Ascending aorta (tissue), 2 donors: ENCODE measurements at regions of chr3 and their contacts with region 1.

Region 1: GRCh38 chr3:12868039-12869034 is 27.0 kb upstream of the RPL32 start:
- DNase-seq: peak; percentile 53 to 94
- H3K4me3 ChIP-seq: peak overlapping the region; percentile 20 to 30
- H3K27ac ChIP-seq: no peak overlapping the region
- H3K4me1 ChIP-seq: peaks cover 3 to 15% of the 10 kb centered on the region in 2 donors
- H3K27me3 ChIP-seq: no peaks in the 10 kb centered on the region
- CTCF ChIP-seq: peak; percentile 90 to 96 (median 91)

Region 2: DNA sequence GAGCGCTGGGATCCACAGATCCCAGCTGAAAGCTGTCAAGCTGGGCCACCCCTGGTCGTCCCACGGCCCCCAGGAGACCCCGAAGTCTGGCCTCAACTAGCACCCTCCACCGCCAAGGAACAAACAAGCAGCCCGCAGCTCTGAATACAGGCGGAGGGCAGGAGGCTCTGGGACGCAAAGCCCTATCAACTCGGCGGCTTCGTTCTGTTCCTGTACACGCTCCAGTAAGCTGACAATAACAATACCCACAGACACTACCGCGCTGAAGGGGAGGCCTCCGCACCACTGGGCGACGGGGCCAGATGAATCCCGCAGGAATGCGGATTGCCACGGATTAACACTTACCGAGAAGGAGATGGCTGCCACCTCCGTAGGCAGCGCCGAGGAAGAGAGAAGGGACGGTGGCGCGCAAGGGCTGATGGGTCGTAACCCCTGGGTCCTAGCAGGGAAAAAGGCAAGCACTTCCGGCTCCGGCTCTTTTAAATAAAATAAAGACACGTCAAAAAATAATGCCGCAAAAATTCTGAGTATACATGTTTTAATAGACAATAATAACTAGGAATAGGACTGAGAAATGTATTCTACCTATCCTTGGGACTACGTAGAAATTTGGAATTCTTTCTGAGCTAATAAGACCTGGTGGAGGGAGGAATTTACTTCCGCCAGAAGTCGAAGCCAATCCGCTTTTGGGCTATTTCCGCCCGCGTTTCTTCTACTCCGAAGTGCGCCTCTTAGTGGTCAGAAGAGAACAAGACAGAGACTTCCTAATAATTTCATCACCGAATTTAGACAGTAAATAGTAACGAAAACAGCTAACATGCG is 27.0 kb before region 1 on chr3 and contains the start of gene RPL32:
- intact Hi-C with region 1: loop called (anchors 2 kb)
- DNase-seq: peak; percentile 31 to 92
- H3K4me3 ChIP-seq: peak within 1 kb of the TSS; percentile 71 to 84
- H3K27ac ChIP-seq: peak within 1 kb of the TSS; percentile 91 to 95
- H3K4me1 ChIP-seq: peaks cover 0 to 19% of the 10 kb centered on the region in 2 donors
- H3K27me3 ChIP-seq: no peaks in the 10 kb centered on the region
- CTCF ChIP-seq: peak; percentile 74 to 82 (median 78)
- total RNA-seq, gene RPL32: 1,821 TPM

Region 3: GRCh38 chr3:12891985-12892839 is 23.9 kb after region 1 on chr3:
- intact Hi-C with region 1: loop called (anchors 1 kb)
- DNase-seq: peak in 1 of 2 donors; percentile 75
- H3K4me3 ChIP-seq: peak overlapping the region in 1 of 2 donors; percentile 53
- H3K27ac ChIP-seq: peak overlapping the region; percentile 48 to 58
- H3K4me1 ChIP-seq: peaks cover 9 to 18% of the 10 kb centered on the region in 2 donors
- H3K27me3 ChIP-seq: no peaks in the 10 kb centered on the region
- CTCF ChIP-seq: peak; percentile 85 to 93 (median 90)

Region 4: DNA sequence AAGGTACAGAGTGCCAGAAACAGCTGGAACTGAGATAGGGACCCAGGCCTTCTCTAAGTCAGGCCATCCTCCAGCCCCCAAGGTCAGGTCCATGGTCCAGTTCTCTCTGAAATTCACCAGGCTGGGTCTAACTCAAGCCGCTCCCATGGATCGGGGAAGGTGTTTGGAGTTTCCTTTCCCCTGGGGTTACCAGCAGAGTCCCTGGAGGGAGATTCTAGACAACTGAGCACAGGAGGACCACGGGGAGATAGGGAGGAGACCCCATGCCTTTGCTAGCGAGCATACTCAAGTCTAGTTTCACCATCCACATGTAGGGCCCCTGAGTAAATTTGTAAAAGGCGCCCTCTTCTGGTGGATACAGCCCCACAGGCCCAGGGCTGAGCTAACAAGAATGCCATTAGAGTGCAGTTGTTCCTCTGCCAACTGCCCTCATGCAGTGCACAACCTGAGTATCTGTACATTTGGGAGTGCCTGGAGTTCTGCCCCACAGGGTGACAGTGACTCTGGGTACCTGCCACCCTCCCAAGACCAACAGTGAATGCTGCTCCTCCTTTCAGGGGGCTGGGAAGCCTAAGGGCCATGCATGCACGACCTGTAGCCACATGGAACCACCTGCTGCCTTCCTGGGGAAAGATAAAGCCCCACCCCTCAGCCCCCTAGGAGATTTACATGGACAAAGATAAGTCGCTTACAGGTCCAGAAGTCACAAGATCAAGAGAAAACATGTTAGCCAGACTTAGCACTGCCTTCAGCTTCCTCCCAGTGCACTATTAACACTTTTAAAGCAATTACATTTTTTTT is 115.9 kb after region 1 on chr3:
- intact Hi-C with region 1: loop called (anchors 1 kb)
- DNase-seq: peak in 1 of 2 donors; percentile 90
- H3K4me3 ChIP-seq: no peak overlapping the region
- H3K27ac ChIP-seq: no peak overlapping the region
- H3K4me1 ChIP-seq: no peaks in the 10 kb centered on the region
- H3K27me3 ChIP-seq: no peaks in the 10 kb centered on the region
- CTCF ChIP-seq: peak; percentile 78 to 86 (median 83)

Region 5: DNA sequence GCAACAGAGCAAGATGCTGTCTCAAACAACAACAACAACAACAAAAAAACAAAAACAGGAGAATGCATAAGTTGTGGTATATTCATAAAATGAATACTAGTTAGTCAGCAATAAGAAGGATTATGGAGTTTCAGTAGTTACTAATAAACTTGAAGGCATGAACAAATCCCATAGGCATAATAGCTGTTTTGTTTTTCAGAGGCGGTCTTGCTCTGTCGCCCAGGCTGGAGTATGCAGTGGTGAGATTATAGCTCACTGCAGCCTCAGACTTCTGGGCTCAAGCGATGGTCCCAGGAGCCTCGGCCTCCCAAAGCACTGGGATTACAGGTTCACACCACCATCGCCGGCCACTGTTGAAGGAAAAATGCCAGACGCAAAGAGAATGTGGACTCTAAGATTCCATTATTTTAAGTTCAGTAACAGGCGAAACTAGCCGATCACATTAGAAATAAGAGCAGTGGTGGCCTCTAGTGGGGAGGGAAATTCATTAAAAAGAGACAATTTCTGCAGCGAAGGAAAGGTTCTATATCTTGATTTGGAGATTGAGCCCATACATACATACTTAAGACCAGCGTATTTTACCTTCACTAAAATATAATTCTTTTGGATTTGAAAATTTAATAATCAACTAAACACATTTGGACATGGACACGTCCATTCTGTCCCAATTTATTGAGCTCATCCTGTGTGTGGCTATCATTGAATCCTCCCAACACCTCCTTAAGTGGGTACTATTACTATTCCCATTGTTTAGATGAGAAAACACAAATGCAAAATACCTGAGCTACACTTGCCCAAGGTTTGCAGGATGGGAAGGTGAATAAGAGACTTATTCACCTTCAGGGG is 584.4 kb after region 1 on chr3:
- intact Hi-C with region 1: loop called (anchors 10 kb)
- DNase-seq: no peak
- H3K4me3 ChIP-seq: peak overlapping the region; percentile 54 to 68
- H3K27ac ChIP-seq: peak overlapping the region; percentile 71 to 80
- H3K4me1 ChIP-seq: peaks cover 0 to 7% of the 10 kb centered on the region in 2 donors
- H3K27me3 ChIP-seq: no peaks in the 10 kb centered on the region
- CTCF ChIP-seq: peak; percentile 42 to 63 (median 56)